ENCODE measurements at regions of chr1 and their contacts with region 1.

Region 1: DNA sequence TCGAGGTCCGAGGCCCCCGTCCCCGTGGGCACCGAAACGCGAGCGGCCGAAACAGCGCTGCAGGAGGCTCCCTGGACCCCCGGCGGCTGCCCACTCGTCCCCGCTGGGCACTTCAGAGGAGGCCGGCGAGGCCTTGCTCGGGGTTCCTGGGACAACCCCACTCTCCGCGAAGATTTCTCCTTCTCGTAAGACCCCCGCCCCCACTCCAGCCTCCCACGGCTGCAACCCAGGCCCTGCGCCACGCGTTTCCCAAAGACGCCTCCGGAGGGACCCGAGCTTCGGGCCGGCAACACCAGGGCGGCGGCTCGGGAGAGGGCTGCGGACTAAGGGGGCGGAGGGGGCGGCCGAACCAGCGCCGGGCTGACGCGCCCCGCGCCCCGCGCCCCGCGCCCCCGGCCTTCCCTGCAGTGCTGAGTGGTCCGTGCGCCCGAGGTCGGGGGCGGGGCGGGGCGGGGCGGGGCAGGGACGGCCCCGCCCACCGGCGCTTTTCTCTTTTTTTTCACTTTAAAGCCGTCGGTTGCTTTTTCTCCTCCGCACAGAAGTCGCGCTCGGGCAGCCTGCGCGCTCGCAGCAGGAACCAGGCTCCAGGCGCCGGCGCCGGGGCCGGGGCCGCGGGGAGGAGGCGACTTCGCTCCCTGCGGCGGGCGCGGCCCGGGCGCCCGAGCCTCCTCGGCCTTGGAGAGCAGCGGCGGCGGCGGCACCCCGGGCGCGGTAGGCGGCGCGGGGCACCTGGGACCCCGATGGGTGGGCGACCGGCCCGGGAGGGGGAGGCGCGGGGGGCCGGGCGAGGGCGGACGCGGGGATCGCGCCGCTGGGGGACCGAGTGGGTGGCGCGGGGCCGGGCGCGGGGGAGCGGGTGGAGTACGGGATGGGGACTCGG is at the start of gene SPSB1:
- DNase-seq: peak; percentile 64 to 67
- H3K4me3 ChIP-seq: peak within 1 kb of the TSS; percentile 63
- H3K4me3 Mint-ChIP-seq: peak within 1 kb of the TSS; percentile 63
- H3K27ac Mint-ChIP-seq: no peak within 1 kb of the TSS
- H3K4me1 ChIP-seq: peaks cover 36% of the 10 kb centered on the region
- H3K4me1 Mint-ChIP-seq: peaks cover 6% of the 10 kb centered on the region
- H3K27me3 ChIP-seq: no peaks in the 10 kb centered on the region
- H3K27me3 Mint-ChIP-seq: no peaks in the 10 kb centered on the region
- CTCF ChIP-seq: no peak
- total RNA-seq, gene SPSB1: 12.8 and 18.2 TPM in 2 replicates

Region 2: GRCh38 chr1:9228609-9229008 is 64.0 kb before region 1 on chr1:
- CTCF ChIA-PET with region 1: no interaction called
- POLR2A ChIA-PET with region 1: no interaction called
- intact Hi-C with region 1: no loop called
- DNase-seq: no peak
- H3K4me3 ChIP-seq: no peak overlapping the region
- H3K4me3 Mint-ChIP-seq: no peak overlapping the region
- H3K27ac Mint-ChIP-seq: no peak overlapping the region
- H3K4me1 ChIP-seq: no peaks in the 10 kb centered on the region
- H3K4me1 Mint-ChIP-seq: no peaks in the 10 kb centered on the region
- H3K27me3 ChIP-seq: no peaks in the 10 kb centered on the region
- H3K27me3 Mint-ChIP-seq: no peaks in the 10 kb centered on the region
- CTCF ChIP-seq: no peak

Region 3: DNA sequence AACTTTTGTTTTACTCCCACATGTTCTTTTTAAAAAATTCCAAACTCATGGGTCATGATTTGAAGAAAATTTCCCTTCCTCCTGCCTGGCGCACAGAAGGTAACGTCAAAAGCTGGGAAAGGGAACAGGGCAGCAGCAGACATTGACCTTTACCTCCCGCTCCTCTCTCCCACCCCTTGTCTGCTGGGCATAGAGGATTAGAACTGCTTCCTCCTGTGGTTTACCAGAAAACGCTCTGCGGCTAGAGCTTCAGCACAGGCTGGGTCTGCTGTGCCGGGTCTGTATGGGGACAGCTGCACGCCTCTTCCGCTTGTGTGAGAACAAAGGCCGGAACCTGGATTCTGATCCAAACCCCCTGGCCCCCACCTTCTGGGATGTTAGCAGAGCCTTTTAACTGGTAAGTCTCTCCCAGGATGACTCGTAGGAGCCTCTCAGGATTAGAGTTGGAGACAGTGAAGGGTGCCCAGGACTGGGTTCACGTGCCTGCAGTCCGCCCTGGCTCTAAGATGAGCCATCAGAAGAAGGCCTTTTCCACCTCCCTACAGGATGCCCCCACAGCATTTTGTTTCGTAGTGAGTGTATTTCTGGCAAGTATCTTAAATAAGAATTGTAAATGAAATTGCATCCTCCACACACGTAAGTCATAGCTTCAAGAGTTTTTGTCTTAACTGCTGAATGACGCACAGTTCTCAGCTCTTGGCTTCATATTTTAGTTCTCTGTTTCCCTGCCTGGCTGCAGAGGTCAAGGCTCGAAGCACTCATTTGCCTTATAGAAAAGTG is 52.8 kb before region 1 on chr1:
- CTCF ChIA-PET with region 1: no interaction called
- POLR2A ChIA-PET with region 1: no interaction called
- intact Hi-C with region 1: no loop called
- DNase-seq: no peak
- H3K4me3 ChIP-seq: no peak overlapping the region
- H3K4me3 Mint-ChIP-seq: no peak overlapping the region
- H3K27ac Mint-ChIP-seq: no peak overlapping the region
- H3K4me1 ChIP-seq: 0 out of 2 replicates have a peak, but pooled peaks cover 5% of the 10 kb centered on the region
- H3K4me1 Mint-ChIP-seq: peaks cover 17% of the 10 kb centered on the region
- H3K27me3 ChIP-seq: no peaks in the 10 kb centered on the region
- H3K27me3 Mint-ChIP-seq: no peaks in the 10 kb centered on the region
- CTCF ChIP-seq: no peak

Region 4: GRCh38 chr1:9362488-9362887 is 69.9 kb after region 1 on chr1:
- CTCF ChIA-PET with region 1: no interaction called
- POLR2A ChIA-PET with region 1: no interaction called
- intact Hi-C with region 1: no loop called
- DNase-seq: no peak
- H3K4me3 ChIP-seq: no peak overlapping the region
- H3K4me3 Mint-ChIP-seq: no peak overlapping the region
- H3K27ac Mint-ChIP-seq: no peak overlapping the region
- H3K4me1 ChIP-seq: no peaks in the 10 kb centered on the region
- H3K4me1 Mint-ChIP-seq: no peaks in the 10 kb centered on the region
- H3K27me3 ChIP-seq: no peaks in the 10 kb centered on the region
- H3K27me3 Mint-ChIP-seq: no peaks in the 10 kb centered on the region
- CTCF ChIP-seq: no peak

Region 5: GRCh38 chr1:9438431-9439073 is 146.0 kb after region 1 on chr1:
- CTCF ChIA-PET with region 1: no interaction called
- POLR2A ChIA-PET with region 1: no interaction called
- intact Hi-C with region 1: loop called (anchors 5 kb)
- DNase-seq: no peak
- H3K4me3 ChIP-seq: no peak overlapping the region
- H3K4me3 Mint-ChIP-seq: no peak overlapping the region
- H3K27ac Mint-ChIP-seq: peak overlapping the region; percentile 8
- H3K4me1 ChIP-seq: peaks cover 60% of the 10 kb centered on the region
- H3K4me1 Mint-ChIP-seq: peaks cover 34% of the 10 kb centered on the region
- H3K27me3 ChIP-seq: no peaks in the 10 kb centered on the region
- H3K27me3 Mint-ChIP-seq: no peaks in the 10 kb centered on the region
- CTCF ChIP-seq: no peak

Region 6: DNA sequence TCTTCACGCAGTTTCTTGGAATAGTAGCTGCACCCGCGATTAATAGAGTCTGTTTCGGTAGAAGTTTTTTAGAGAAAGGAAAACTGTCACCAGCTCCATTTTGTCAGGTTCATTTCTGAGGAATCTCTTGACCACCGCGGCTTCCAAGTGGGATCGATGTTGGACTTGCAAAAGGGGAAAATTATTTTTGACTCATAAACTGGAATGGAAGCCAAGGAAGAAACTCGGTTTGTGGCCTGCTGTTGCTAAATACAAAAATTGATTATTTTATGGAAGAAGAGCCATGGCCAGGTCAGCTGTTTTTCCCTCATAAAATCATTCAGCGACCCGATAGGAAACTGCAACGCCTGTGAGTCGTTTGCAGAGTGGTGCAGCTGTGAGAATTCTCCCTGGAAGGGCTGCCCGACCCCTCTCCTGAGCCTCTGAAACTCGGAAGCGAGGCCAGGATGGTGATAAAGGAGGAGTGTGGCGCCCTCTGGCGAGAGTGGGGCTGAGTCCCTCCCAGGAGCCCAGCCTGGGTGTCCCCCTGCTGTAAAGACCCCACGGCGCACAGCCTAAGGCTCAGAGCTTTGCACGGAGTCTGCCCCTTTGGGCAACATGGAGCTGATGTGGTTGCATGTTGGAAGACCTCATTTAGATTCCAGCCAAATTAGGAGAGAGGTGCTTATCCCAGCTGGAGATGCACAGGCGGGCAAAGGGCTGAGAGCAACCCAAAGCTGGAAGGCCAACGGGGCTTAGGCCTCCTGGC is 163.1 kb after region 1 on chr1:
- CTCF ChIA-PET with region 1: interaction called, 12 read pairs
- POLR2A ChIA-PET with region 1: no interaction called
- intact Hi-C with region 1: no loop called
- DNase-seq: peak; percentile 74 to 75
- H3K4me3 ChIP-seq: no peak overlapping the region
- H3K4me3 Mint-ChIP-seq: no peak overlapping the region
- H3K27ac Mint-ChIP-seq: no peak overlapping the region
- H3K4me1 ChIP-seq: peaks cover 24% of the 10 kb centered on the region
- H3K4me1 Mint-ChIP-seq: peaks cover 24% of the 10 kb centered on the region
- H3K27me3 ChIP-seq: no peaks in the 10 kb centered on the region
- H3K27me3 Mint-ChIP-seq: no peaks in the 10 kb centered on the region
- CTCF ChIP-seq: peak; percentile 76 to 82

Region 7: DNA sequence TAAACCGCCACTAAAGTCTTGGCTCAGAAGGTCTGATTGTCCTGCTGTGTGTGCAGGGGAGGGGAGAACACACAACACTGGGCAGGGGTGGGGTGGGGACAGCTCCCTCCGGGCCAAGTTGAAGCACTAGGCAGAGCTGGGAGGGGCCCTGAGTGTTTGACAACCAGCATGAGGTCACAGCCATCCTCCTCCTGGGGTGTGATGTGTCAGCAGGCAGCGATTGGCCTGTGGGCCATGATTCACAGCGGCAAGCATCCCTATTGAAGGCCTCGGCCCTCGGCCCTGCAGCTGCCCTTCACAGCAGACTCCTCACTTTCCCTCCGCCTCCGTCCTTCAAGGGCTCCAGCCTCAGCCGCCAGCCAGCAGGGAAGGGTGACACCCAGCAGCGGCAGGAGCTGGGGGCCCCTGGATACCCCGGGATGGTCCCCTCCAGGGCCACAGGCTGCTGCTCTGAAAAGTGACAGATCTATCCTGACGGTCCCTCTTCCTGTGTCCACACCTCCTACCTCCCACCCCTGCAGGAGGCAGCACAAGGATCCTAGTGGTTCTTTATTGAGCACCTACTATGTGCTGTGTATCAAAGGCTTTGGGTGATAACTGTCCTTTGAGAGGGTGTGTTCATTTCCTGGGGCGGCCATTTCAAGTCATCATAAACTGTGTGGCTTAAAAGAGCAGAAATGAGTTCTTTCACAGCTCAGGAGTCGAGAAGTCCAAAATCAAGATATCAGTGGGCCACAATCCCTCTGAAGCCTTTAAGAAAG is 180.6 kb after region 1 on chr1:
- CTCF ChIA-PET with region 1: interaction called, 11 read pairs
- POLR2A ChIA-PET with region 1: no interaction called
- intact Hi-C with region 1: no loop called
- DNase-seq: peak in 1 of 2 experiments; percentile 30
- H3K4me3 ChIP-seq: no peak overlapping the region
- H3K4me3 Mint-ChIP-seq: no peak overlapping the region
- H3K27ac Mint-ChIP-seq: no peak overlapping the region
- H3K4me1 ChIP-seq: no peaks in the 10 kb centered on the region
- H3K4me1 Mint-ChIP-seq: no peaks in the 10 kb centered on the region
- H3K27me3 ChIP-seq: no peaks in the 10 kb centered on the region
- H3K27me3 Mint-ChIP-seq: no peaks in the 10 kb centered on the region
- CTCF ChIP-seq: no peak

Region 8: DNA sequence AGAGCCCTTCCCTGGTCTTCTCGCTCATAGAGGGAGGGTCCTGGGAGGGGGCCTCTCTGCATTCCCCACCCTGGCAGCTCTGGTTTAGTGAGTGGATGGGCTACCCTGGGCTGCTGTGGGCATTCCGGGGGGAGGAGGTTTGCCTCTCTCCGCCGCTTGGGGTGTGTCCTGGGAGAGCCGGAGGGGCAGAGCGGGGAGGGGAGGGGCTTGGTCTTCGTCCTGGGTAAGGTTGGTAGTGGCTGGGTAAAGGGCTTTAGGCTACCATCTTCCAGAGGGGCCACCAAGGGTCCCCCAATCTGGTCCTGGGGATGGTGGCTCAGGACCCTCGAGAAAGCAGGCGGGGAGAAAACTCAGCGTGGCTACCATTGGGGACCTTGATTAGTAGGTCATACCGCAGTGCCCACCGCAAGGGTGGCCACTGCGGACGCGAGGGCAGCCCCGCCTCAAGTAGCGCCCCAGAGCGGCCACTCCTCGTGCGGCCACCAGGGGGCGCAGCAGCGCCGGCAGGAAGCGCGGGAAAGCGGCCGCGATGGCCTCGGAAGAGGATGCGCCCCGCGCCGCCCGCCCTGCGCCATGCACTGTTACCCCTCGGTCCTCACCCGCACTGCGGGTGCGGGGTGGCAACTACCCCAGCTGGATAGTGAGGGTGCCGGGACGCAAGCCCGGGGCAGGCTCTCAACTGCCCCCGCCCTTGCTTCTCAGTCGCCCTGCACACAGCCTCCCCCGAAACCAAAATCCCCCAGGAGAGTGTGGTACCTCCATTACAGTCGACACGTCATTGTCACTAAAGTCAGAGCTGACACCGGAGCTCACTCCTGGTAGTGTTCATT is 202.5 kb after region 1 on chr1:
- CTCF ChIA-PET with region 1: interaction called, 19 read pairs
- POLR2A ChIA-PET with region 1: no interaction called
- intact Hi-C with region 1: loop called (anchors 1 kb)
- DNase-seq: peak in 1 of 2 experiments; percentile 76
- H3K4me3 ChIP-seq: peak overlapping the region; percentile 34
- H3K4me3 Mint-ChIP-seq: peak overlapping the region; percentile 70
- H3K27ac Mint-ChIP-seq: no peak overlapping the region
- H3K4me1 ChIP-seq: no peaks in the 10 kb centered on the region
- H3K4me1 Mint-ChIP-seq: peaks cover 9% of the 10 kb centered on the region
- H3K27me3 ChIP-seq: no peaks in the 10 kb centered on the region
- H3K27me3 Mint-ChIP-seq: no peaks in the 10 kb centered on the region
- CTCF ChIP-seq: peak; percentile 83 to 96

Region 9: GRCh38 chr1:9538669-9539164 is 246.1 kb after region 1 on chr1:
- CTCF ChIA-PET with region 1: no interaction called
- POLR2A ChIA-PET with region 1: no interaction called
- intact Hi-C with region 1: no loop called
- DNase-seq: peak in 1 of 2 experiments; percentile 27
- H3K4me3 ChIP-seq: peak overlapping the region; percentile 20; the same call in 1 of the 2 replicates
- H3K4me3 Mint-ChIP-seq: peak overlapping the region; percentile 66
- H3K27ac Mint-ChIP-seq: peak overlapping the region; percentile 82
- H3K4me1 ChIP-seq: peaks cover 18% of the 10 kb centered on the region
- H3K4me1 Mint-ChIP-seq: peaks cover 12% of the 10 kb centered on the region
- H3K27me3 ChIP-seq: no peaks in the 10 kb centered on the region
- H3K27me3 Mint-ChIP-seq: no peaks in the 10 kb centered on the region
- CTCF ChIP-seq: no peak

Region 10: DNA sequence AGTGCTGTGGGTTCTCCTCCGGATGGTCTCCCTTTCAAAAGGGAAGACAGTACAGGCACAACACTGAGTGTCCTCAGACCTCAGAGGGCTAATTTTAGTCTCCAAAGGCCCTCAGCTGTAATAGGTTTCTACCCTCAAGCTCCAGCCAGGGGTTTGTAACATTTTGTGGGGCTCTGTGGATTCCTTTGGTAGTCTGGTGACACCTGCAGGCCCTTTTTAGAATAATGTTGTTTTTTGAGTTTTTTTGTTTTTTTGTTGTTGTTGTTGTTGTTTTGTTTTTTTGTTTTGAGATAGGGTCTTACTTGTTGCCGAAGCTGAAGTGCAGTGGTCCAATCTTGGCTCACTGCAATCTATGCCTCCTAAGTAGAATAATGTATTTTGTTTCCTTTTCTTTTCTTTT is 281.1 kb after region 1 on chr1:
- CTCF ChIA-PET with region 1: no interaction called
- POLR2A ChIA-PET with region 1: no interaction called
- intact Hi-C with region 1: loop called (anchors 10 kb)
- DNase-seq: peak in 1 of 2 experiments; percentile 13
- H3K4me3 ChIP-seq: no peak overlapping the region
- H3K4me3 Mint-ChIP-seq: no peak overlapping the region
- H3K27ac Mint-ChIP-seq: no peak overlapping the region
- H3K4me1 ChIP-seq: no peaks in the 10 kb centered on the region
- H3K4me1 Mint-ChIP-seq: peaks cover 6% of the 10 kb centered on the region
- H3K27me3 ChIP-seq: no peaks in the 10 kb centered on the region
- H3K27me3 Mint-ChIP-seq: no peaks in the 10 kb centered on the region
- CTCF ChIP-seq: peak; percentile 14 to 19

Measured in Caco-2 (cell line).